Naive thymus-derived CD4-positive, alpha-beta T cell (primary cell): ENCODE measurements at regions of chr6 and their contacts with region 1.

Region 1: DNA sequence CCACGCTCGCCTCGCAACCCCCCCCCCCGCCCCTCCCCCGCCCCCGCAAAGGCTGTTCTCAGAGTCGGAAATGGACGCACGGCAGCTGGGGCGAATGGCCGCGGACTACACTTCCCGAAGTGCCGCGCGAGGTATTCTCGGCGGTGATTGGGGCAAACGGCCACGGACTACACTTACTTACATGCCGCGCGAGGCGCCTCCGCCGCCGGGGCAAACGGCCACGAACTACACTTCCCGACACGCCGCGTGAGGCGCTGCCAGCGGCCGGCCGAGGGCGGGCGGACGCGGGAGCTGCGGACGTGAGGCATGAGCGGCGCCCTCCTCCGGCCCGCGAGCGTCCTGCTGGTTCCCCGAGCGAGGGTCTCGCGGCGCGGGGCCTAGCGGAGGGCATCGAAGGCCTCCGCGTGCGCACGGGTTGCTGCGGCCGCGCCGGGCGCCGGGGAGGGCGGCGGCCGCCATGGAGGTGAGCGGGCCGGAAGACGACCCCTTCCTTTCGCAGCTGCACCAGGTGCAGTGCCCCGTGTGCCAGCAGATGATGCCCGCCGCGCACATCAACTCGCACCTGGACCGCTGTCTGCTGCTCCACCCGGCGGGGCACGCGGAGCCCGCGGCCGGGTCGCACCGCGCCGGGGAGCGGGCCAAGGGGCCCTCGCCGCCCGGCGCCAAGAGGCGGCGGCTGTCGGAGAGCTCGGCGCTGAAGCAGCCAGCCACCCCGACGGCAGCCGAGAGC is at the start of gene WRNIP1:
- DNase-seq: peak; percentile 89 to 97 (median 97)
- ATAC-seq: peak; percentile 90
- H3K4me3 ChIP-seq: peak within 1 kb of the TSS; percentile 76
- H3K4me3 Mint-ChIP-seq: peak within 1 kb of the TSS; percentile 86 to 96 (median 94)
- H3K27ac ChIP-seq: peak within 1 kb of the TSS; percentile 88
- H3K27ac Mint-ChIP-seq: peak within 1 kb of the TSS; percentile 89 to 100 (median 99)
- H3K4me1 ChIP-seq: peaks cover 30 to 31% of the 10 kb centered on the region in 2 donors
- H3K4me1 Mint-ChIP-seq: peaks cover 27 to 54% (median 50%) of the 10 kb centered on the region in 7 donors
- H3K27me3 ChIP-seq: no peaks in the 10 kb centered on the region
- H3K27me3 Mint-ChIP-seq: no peaks in the 10 kb centered on the region
- total RNA-seq, gene WRNIP1: 31.2 to 47.6 (median 37.8) TPM

Region 2: GRCh38 chr6:1200718-1201105 is 1564.6 kb before region 1 on chr6:
- CTCF ChIA-PET with region 1: no interaction called
- POLR2A ChIA-PET with region 1: no interaction called
- intact Hi-C with region 1: no loop called
- DNase-seq: no peak
- ATAC-seq: no peak
- H3K4me3 ChIP-seq: no peak overlapping the region
- H3K4me3 Mint-ChIP-seq: no peak overlapping the region
- H3K27ac ChIP-seq: no peak overlapping the region
- H3K27ac Mint-ChIP-seq: no peak overlapping the region
- H3K4me1 ChIP-seq: no peaks in the 10 kb centered on the region
- H3K4me1 Mint-ChIP-seq: peaks cover 0 to 9% (median 7%) of the 10 kb centered on the region in 7 donors
- H3K27me3 ChIP-seq: no peaks in the 10 kb centered on the region
- H3K27me3 Mint-ChIP-seq: peaks cover 2 to 29% (median 19%) of the 10 kb centered on the region in 5 donors

Region 3: GRCh38 chr6:2542858-2543218 is 222.5 kb before region 1 on chr6:
- CTCF ChIA-PET with region 1: no interaction called
- POLR2A ChIA-PET with region 1: no interaction called
- intact Hi-C with region 1: loop called in 1 of 2 experiments (anchors 5 kb)
- DNase-seq: peak in 8 of 9 donors; percentile 20 to 64 (median 49)
- ATAC-seq: peak; percentile 87
- H3K4me3 ChIP-seq: peak overlapping the region; percentile 14
- H3K4me3 Mint-ChIP-seq: peak overlapping the region; percentile 18 to 73 (median 53)
- H3K27ac ChIP-seq: no peak overlapping the region
- H3K27ac Mint-ChIP-seq: peak overlapping the region in 3 of 9 donors; percentile 1 to 61 (median 15)
- H3K4me1 ChIP-seq: peaks cover 16 to 20% of the 10 kb centered on the region in 2 donors
- H3K4me1 Mint-ChIP-seq: peaks cover 17 to 35% (median 25%) of the 10 kb centered on the region in 7 donors
- H3K27me3 ChIP-seq: peaks cover 0 to 4% of the 10 kb centered on the region in 2 donors
- H3K27me3 Mint-ChIP-seq: peaks cover 57 to 77% (median 63%) of the 10 kb centered on the region in 5 donors

Region 4: DNA sequence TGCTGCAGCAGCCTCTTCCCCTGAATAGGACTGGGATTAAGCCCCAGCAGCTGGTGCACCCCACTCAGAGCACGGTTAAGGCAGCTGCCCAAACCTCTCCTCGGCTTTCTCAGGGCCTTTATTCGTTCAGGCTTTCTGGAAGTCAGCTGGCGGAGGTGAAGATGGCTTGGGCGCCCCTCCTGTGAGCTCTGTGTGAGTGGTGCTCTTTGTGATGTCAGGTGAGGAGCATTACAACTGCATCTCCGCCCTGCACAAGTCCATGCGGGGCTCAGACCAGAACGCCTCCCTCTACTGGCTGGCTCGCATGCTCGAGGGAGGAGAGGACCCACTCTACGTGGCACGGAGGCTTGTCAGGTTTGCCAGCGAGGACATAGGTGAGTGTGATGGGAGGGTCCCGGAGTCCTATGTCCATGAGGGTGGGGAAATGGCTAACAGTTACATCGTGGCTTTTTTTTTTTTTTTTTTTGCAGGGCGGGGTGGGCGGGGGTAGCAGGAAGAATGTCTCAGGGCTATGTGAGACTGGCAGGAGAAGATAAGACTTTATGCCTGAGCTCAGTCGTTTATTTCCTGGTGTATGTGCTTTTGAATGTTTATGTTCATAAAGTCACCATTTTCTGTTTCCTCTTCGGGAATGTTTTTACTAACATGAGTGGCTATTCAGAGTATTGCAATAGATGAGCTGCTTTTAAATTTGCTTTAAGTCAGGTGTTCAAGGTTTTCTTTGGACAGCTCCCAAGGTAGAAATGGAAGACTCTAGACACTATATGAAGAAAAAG is 18.0 kb after region 1 on chr6:
- CTCF ChIA-PET with region 1: interaction called, 7 read pairs
- POLR2A ChIA-PET with region 1: interaction called, 16 read pairs
- intact Hi-C with region 1: loop called in 1 of 2 experiments (anchors 2 kb)
- DNase-seq: no peak
- ATAC-seq: peak; percentile 63
- H3K4me3 ChIP-seq: no peak overlapping the region
- H3K4me3 Mint-ChIP-seq: no peak overlapping the region
- H3K27ac ChIP-seq: no peak overlapping the region
- H3K27ac Mint-ChIP-seq: peak overlapping the region in 3 of 9 donors; percentile 38 to 77 (median 45)
- H3K4me1 ChIP-seq: no peaks in the 10 kb centered on the region
- H3K4me1 Mint-ChIP-seq: peaks cover 21 to 40% (median 29%) of the 10 kb centered on the region in 7 donors
- H3K27me3 ChIP-seq: no peaks in the 10 kb centered on the region
- H3K27me3 Mint-ChIP-seq: no peaks in the 10 kb centered on the region

Region 5: DNA sequence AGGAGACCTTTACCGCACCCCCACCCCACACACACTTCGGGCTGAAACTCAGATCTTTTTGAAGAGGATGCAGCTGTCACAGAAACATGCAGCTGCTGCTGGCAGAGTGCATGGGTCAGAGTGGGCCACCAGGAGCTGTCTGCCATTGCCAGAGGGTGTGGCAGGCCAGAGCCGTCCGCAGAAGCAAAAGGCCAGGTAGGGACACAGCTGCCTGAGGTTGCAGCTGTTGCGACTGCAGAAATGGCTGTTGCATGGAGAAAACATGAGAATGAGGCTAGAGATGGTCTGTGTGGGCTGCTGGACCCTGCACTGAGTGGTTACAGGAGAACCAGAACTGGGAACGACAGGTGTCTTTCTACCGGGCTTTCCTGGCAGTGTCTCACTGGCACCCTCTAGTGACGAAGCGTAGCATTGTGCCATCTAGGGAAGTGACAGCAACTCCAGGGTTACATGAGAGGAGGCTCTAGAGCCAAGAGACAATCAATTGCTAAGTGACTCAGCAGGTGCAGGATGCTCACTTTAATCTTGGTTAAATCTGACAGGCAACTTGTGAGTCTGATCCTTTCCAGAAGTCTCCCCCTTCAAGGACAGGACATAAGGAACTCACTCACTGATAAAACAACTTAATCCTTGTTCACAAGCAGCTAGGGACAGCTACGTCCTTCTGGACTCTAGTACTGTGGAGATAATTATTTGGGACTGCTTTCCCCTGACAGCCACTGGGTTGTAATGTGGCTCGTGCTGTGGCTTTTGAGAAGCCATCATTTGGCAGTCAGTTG is 166.8 kb after region 1 on chr6:
- CTCF ChIA-PET with region 1: interaction called, 3 read pairs
- POLR2A ChIA-PET with region 1: no interaction called
- intact Hi-C with region 1: loop called in 1 of 2 experiments (anchors 2 kb)
- DNase-seq: peak; percentile 61 to 87 (median 82)
- ATAC-seq: peak; percentile 99
- H3K4me3 ChIP-seq: no peak overlapping the region
- H3K4me3 Mint-ChIP-seq: peak overlapping the region in 8 of 10 donors; percentile 28 to 71 (median 44)
- H3K27ac ChIP-seq: no peak overlapping the region
- H3K27ac Mint-ChIP-seq: peak overlapping the region in 8 of 9 donors; percentile 3 to 86 (median 60)
- H3K4me1 ChIP-seq: peaks cover 8 to 20% of the 10 kb centered on the region in 2 donors
- H3K4me1 Mint-ChIP-seq: peaks cover 8 to 42% (median 26%) of the 10 kb centered on the region in 7 donors
- H3K27me3 ChIP-seq: no peaks in the 10 kb centered on the region
- H3K27me3 Mint-ChIP-seq: peaks cover 0 to 10% (median 0%) of the 10 kb centered on the region in 5 donors

Region 6: DNA sequence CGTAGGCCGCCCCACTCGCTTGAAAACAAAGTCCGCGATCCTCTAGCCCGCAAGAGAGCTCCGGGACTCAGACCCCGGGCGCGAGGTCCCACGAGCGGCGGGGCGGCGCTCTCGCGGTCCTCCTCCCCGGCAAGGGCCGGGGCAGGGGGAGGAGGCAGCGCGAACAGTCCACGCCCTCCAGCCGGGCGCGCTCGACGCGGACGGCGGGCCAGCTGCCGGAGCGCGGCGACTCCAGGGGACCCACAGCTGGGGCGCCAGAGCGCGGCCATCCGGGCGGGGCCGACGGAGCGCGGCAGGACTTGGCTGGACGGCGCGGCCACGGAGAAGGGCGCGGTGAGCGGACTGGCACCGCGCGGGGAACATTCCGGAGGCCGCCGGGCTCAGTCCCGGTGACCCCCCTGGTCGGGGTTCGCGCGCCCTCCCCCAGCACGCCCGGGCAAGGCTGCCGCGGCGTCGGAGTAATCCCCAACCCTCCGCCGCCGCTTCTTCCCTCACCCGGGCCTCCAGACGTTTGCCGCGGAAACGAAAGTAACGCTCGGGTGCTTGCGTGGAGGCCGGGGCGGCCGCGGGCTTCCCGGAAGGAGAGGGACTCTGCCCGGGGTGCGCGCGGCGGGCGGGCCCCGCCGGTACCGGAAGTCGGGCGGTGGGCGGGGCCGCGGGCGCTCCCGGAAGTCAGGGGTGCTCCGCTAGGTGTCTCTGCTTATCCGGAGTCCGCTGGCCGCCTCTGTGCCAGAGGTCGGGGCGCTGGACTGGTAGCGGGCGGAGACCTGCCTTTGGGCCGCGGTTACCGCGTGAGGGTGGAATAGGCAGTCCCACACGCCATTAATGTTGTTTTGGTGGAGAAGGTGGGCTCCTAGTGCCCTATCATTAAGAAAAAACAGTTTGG is 303.2 kb after region 1 on chr6 and contains the start of gene RIPK1:
- CTCF ChIA-PET with region 1: no interaction called
- POLR2A ChIA-PET with region 1: interaction called, 5 read pairs
- intact Hi-C with region 1: loop called (anchors 1 kb)
- DNase-seq: peak; percentile 92 to 98 (median 95)
- ATAC-seq: peak; percentile 88
- H3K4me3 ChIP-seq: peak within 1 kb of the TSS; percentile 86
- H3K4me3 Mint-ChIP-seq: peak within 1 kb of the TSS; percentile 91 to 99 (median 96)
- H3K27ac ChIP-seq: peak within 1 kb of the TSS; percentile 99
- H3K27ac Mint-ChIP-seq: peak within 1 kb of the TSS; percentile 92 to 99 (median 98)
- H3K4me1 ChIP-seq: peaks cover 23% of the 10 kb centered on the region in 2 donors
- H3K4me1 Mint-ChIP-seq: peaks cover 41 to 83% (median 69%) of the 10 kb centered on the region in 7 donors
- H3K27me3 ChIP-seq: no peaks in the 10 kb centered on the region
- H3K27me3 Mint-ChIP-seq: no peaks in the 10 kb centered on the region
- total RNA-seq, gene RIPK1: 20.3 to 34.8 (median 32.4) TPM

Region 7: GRCh38 chr6:3356056-3356761 is 590.9 kb after region 1 on chr6:
- CTCF ChIA-PET with region 1: no interaction called
- POLR2A ChIA-PET with region 1: no interaction called
- intact Hi-C with region 1: loop called in 1 of 2 experiments (anchors 1 kb)
- DNase-seq: peak in 8 of 9 donors; percentile 31 to 86 (median 78)
- ATAC-seq: peak; percentile 89
- H3K4me3 ChIP-seq: peak overlapping the region; percentile 65
- H3K4me3 Mint-ChIP-seq: peak overlapping the region; percentile 76 to 99 (median 88)
- H3K27ac ChIP-seq: peak overlapping the region; percentile 78
- H3K27ac Mint-ChIP-seq: peak overlapping the region in 8 of 9 donors; percentile 92 to 100 (median 98)
- H3K4me1 ChIP-seq: peaks cover 7 to 27% of the 10 kb centered on the region in 2 donors
- H3K4me1 Mint-ChIP-seq: peaks cover 14 to 79% (median 58%) of the 10 kb centered on the region in 7 donors
- H3K27me3 ChIP-seq: no peaks in the 10 kb centered on the region
- H3K27me3 Mint-ChIP-seq: peaks cover 0 to 43% (median 0%) of the 10 kb centered on the region in 5 donors